Activated CD8-positive, alpha-beta T cell treated with anti-CD3 and anti-CD28 coated beads for 36 hours (primary cell): ENCODE measurements at regions of chr2 and their contacts with region 1.

Region 1: DNA sequence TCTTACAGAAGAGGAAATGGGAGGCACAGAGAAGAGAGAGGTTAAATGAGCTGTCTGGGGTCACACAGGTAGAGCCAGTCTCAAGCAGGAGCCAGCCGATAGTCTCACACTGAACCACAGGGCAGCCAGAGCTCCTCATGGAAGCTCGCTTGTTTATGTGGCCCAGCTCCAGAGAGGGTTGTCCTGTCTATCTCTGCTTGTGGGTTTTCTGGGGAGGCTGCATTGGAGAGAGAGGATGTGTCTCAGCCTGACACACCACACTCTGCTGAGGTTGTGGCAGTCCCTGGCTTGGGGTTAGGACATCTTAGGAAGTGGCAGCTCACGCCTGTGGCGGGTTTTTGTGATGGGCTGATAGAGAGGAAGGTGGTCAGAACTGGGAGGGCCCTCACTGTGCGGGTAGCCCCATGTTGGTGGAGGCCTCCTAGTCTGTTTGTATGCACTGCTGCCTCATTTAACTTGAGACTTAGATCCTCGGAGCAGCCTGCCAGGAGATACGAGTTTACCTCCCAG is 52.3 kb downstream of the TCF7L1 start:
- DNase-seq: no peak
- ATAC-seq: no peak
- H3K4me3 Mint-ChIP-seq: no peak overlapping the region
- H3K27ac Mint-ChIP-seq: no peak overlapping the region
- H3K4me1 Mint-ChIP-seq: peaks cover 2% of the 10 kb centered on the region
- H3K27me3 Mint-ChIP-seq: peaks cover 8% of the 10 kb centered on the region
- CTCF ChIP-seq: no peak

Region 2: DNA sequence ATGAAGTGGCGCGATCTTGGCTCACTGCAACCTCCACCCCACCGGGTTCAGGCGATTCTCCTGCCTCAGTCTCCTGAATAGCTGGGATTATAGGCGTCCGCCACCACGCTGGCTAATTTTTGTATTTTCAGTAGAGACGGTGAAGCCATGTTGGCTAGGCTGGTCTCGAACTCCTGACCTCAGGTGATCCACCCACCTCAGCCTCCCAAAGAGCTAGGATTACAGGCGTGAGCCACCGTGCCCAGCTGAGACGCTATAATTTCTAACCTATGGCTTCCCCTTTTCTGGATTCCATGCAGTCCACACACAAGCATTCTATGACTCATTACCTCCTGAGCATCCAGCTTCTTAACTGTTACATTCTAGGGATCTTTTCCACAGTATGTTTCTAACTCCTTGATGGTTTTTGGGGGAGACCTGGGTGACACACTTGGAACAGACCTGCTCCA is 226.4 kb before region 1 on chr2:
- CTCF ChIA-PET with region 1: no interaction called
- POLR2A ChIA-PET with region 1: no interaction called
- intact Hi-C with region 1: no loop called
- DNase-seq: no peak
- ATAC-seq: no peak
- H3K4me3 Mint-ChIP-seq: no peak overlapping the region
- H3K27ac Mint-ChIP-seq: peak overlapping the region; percentile 59
- H3K4me1 Mint-ChIP-seq: peaks cover 25% of the 10 kb centered on the region
- H3K27me3 Mint-ChIP-seq: no peaks in the 10 kb centered on the region
- CTCF ChIP-seq: no peak

Region 3: DNA sequence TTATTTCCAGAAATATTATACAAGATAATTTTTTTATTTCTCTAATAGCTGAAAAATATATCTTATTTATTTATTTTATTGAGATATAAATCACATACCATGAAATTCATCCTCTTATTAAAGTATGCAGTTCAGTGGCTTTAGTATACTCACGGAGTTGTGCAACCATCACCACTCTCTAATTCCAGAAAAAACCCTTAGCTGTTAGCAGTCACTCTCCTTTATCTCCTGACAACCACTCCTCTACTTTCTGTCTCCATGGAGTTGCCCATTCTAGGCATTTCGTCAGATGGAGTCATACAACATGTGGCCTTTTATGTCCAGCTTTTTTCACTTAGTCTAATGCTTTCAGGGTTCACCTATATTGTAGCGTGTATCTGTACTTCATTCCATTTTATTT is 14.2 kb after region 1 on chr2:
- CTCF ChIA-PET with region 1: interaction called, 17 read pairs
- POLR2A ChIA-PET with region 1: interaction called, 3 read pairs
- intact Hi-C with region 1: no loop called
- DNase-seq: no peak
- ATAC-seq: no peak
- H3K4me3 Mint-ChIP-seq: no peak overlapping the region
- H3K27ac Mint-ChIP-seq: no peak overlapping the region
- H3K4me1 Mint-ChIP-seq: no peaks in the 10 kb centered on the region
- H3K27me3 Mint-ChIP-seq: peaks cover 3% of the 10 kb centered on the region
- CTCF ChIP-seq: no peak